Cardiac septum (tissue), 1 donor: ENCODE measurements at regions of chr20 and their contacts with region 1.

Region 1: GRCh38 chr20:5126512-5127203 is at the start of gene CDS2:
- DNase-seq: peak; percentile 100
- total RNA-seq, gene CDS2: 84.0 TPM

Region 2: DNA sequence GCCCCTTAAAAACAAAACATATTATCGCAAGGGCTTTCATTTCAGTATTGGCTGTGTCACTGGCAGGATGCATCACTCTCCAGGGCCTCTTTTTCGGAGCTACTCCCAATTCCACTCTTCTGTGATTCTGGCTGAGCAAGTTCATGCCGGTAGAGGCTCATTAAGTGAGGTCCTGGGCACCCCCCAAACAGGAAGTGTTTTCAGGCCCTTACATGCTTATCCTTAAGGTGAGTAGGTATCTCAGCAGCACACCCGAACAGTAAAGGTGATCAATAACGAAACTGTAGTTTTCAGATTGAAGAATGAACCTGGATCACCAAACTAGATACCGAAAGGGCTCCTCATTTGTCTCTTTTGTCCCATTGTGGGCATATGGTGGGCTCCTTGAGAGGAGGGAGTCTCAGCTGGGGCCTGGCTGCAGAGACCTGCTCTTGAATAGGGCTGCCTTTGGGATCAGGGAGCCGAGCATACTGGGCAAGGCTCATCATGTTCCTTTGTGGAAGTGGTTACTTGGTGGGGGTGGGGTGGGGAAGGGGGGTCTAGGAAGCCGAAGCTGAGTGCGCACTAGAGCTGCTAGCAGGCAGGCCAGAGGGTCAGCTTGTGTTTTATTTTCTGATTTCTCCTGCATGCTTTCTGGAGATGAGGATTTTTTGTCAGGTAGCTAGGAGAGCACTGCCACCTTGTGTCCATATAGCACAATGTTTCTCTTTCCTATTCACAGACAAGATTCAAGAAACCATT is 65.3 kb after region 1 on chr20:
- intact Hi-C with region 1: loop called (anchors 1 kb)
- DNase-seq: no peak

Region 3: GRCh38 chr20:5448449-5449118 is 321.9 kb after region 1 on chr20:
- intact Hi-C with region 1: loop called (anchors 10 kb)
- DNase-seq: no peak